PC-3 (cell line): ENCODE measurements at regions of chr12 and their contacts with region 1.

Region 1: DNA sequence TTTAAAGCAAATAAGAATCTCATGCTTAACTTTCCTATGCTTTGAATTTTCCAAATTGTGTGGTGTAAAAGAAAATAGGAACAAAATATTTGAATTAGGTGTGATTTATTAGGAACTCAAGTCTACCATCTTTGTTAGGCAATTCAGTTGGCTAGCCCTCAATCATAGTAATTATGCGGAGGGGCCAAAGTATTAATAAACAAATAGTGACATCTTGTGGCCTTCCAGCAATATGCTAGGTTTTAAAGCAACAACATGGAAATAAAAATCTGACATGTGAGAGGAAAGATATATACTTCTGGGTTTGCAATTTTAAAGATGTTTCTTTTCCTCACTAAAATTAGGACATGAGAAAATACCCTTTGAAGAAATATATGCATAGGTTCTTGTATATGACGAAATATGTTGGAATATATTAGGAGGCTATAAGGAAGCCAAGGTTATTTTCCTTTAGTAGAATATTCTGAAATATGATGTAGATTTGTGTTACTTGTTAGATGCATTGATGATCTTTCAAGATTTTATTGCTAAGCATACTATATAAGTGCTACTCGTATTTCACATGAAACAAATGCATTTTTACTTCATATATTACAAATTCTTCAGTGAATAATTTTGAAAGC is 200.4 kb downstream of the PTPRO start:
- DNase-seq: peak; percentile 67
- ATAC-seq: peak; percentile 29; the same call in 1 of the 2 replicates
- H3K4me3 ChIP-seq: no peak overlapping the region
- H3K27ac ChIP-seq: no peak overlapping the region
- H3K4me1 ChIP-seq: no peaks in the 10 kb centered on the region
- H3K27me3 ChIP-seq: peaks cover 8% of the 10 kb centered on the region; the same call in 1 of the 2 replicates
- CTCF ChIP-seq: peak; percentile 74

Region 2: GRCh38 chr12:15116086-15116485 is 406.6 kb before region 1 on chr12:
- CTCF ChIA-PET with region 1: no interaction called
- POLR2A ChIA-PET with region 1: no interaction called
- intact Hi-C with region 1: no loop called
- DNase-seq: no peak
- ATAC-seq: no peak
- H3K4me3 ChIP-seq: no peak overlapping the region
- H3K27ac ChIP-seq: no peak overlapping the region
- H3K4me1 ChIP-seq: no peaks in the 10 kb centered on the region
- H3K27me3 ChIP-seq: peaks cover 70% of the 10 kb centered on the region
- CTCF ChIP-seq: no peak

Region 3: DNA sequence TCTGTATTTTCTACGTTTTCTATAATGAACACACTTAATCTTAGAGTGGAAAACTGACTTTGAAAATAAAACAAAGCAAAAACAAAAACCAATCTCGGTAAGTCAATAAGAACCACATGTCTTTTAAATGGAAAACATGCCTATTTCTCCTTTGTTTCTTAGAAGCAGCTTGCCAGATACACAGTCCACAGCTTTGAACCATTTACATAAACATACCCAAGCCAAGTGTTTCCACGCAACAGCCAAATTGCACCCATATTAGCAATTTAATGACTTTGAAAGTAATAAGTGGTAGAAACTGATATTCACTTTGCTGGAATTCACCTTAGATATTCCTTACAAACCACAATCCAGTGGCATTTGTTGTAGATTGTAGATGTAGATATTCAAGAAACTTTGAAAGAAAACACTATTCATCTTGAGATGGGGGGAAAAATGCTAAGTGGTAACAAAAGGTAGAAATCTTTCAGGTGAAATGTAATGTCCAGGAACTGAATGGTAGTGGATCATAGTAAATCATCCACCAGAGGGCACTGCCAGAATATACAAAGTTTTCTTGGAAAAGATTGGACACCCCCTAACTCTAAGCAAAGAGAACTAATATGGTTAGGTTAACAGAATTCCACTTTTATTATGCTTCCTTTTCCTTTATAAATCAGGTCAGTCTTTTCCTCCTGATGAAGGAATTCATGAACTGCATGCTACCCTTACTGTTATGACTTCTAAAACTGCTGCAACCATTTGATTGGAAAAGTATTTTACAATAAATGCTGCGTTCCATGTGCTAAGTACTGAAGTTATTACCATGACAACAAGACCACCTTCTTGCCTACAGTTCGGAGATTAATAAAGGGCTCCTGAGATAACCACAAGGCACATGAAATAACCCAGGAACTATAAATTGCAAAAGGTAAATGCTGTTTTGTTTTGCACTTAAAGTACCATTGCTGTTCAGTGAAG is 371.2 kb before region 1 on chr12:
- CTCF ChIA-PET with region 1: no interaction called
- POLR2A ChIA-PET with region 1: no interaction called
- intact Hi-C with region 1: loop called (anchors 5 kb)
- DNase-seq: peak; percentile 42
- ATAC-seq: no peak
- H3K4me3 ChIP-seq: no peak overlapping the region
- H3K27ac ChIP-seq: no peak overlapping the region
- H3K4me1 ChIP-seq: no peaks in the 10 kb centered on the region
- H3K27me3 ChIP-seq: peaks cover 43% of the 10 kb centered on the region; the same call in 1 of the 2 replicates
- CTCF ChIP-seq: peak; percentile 61

Region 4: GRCh38 chr12:15227004-15227679 is 295.5 kb before region 1 on chr12:
- CTCF ChIA-PET with region 1: interaction called, 12 read pairs
- POLR2A ChIA-PET with region 1: no interaction called
- intact Hi-C with region 1: loop called (anchors 1 kb)
- DNase-seq: peak; percentile 67
- ATAC-seq: peak; percentile 71
- H3K4me3 ChIP-seq: no peak overlapping the region
- H3K27ac ChIP-seq: no peak overlapping the region
- H3K4me1 ChIP-seq: no peaks in the 10 kb centered on the region
- H3K27me3 ChIP-seq: no peaks in the 10 kb centered on the region
- CTCF ChIP-seq: peak; percentile 76

Region 5: GRCh38 chr12:15268927-15269552 is 253.6 kb before region 1 on chr12:
- CTCF ChIA-PET with region 1: interaction called, 10 read pairs
- POLR2A ChIA-PET with region 1: no interaction called
- intact Hi-C with region 1: no loop called
- DNase-seq: peak; percentile 56
- ATAC-seq: peak; percentile 46
- H3K4me3 ChIP-seq: no peak overlapping the region
- H3K27ac ChIP-seq: no peak overlapping the region
- H3K4me1 ChIP-seq: peaks cover 6% of the 10 kb centered on the region
- H3K27me3 ChIP-seq: no peaks in the 10 kb centered on the region
- CTCF ChIP-seq: peak; percentile 83

Region 6: DNA sequence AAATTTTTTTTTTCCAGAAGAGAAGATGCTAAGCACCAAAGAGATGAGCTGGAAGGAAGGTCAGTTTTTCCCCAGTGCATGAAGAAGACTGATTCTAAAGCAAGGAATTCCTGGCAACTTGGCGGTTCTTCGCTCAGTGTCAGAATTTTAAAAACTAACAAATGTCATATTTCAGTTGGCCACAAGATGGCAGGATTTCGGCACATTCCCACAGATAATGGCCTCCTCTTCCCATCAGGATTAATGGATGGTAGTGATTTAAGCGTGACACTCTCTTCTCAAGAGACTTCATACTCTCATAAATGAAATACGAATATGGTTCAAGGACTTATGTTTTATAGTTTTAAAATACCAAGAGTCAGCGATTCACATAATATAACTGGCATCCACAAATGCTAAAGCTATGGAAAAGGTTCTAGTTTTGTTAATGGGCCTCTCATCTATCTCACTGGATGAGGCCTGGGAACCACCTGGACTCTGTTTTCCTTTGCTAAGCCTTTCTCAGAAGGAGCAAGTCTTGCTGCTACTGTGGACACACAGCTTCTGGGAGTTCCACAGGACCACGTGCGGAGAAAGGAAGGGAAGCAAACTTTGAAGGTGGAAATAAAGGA is 246.5 kb before region 1 on chr12:
- CTCF ChIA-PET with region 1: interaction called, 10 read pairs
- POLR2A ChIA-PET with region 1: no interaction called
- intact Hi-C with region 1: loop called (anchors 1 kb)
- DNase-seq: peak; percentile 70
- ATAC-seq: no peak
- H3K4me3 ChIP-seq: no peak overlapping the region
- H3K27ac ChIP-seq: 0 out of 2 replicates have a peak overlapping the region, but pooled peaks have one; percentile 85
- H3K4me1 ChIP-seq: peaks cover 49% of the 10 kb centered on the region
- H3K27me3 ChIP-seq: no peaks in the 10 kb centered on the region
- CTCF ChIP-seq: peak; percentile 71

Region 7: DNA sequence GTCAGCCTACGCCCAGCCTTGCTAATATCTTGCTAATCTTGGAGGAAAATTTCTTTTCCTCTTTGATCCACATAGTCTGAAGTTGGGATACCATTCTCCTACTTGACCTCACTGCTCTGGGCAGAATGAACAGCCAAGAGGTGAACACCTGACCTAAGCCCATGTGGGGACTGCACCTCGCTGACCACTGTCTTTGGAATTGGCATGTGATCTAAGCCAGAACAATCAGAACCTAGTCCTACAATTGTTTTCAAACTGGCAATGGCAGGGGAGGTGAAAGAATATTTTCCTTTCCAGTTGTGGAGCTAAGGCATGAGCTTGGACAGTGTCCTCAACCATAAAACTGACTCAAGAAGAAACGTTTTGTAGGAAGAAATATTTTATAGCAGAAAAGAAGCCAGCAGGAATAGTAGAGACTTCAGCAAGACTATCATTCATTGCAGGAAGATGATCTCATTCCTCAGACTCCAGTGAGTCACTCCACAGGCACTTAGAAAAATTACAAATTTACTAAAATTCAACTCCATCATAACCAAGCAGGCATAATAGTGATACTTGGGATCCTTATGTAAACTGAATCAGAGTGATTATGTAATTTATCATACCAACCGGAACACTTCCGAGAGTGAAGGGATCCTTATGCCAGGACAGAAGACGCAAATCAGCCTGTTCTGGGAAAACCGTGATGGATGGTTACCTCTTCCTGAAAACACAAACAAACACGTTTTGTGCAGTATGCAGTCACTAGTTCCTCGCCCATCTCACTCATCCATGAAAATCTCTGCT is 185.7 kb before region 1 on chr12:
- CTCF ChIA-PET with region 1: interaction called, 10 read pairs
- POLR2A ChIA-PET with region 1: no interaction called
- intact Hi-C with region 1: no loop called
- DNase-seq: peak; percentile 52
- ATAC-seq: peak; percentile 67; the same call in 1 of the 2 replicates
- H3K4me3 ChIP-seq: no peak overlapping the region
- H3K27ac ChIP-seq: no peak overlapping the region
- H3K4me1 ChIP-seq: peaks cover 15% of the 10 kb centered on the region
- H3K27me3 ChIP-seq: 0 out of 2 replicates have a peak, but pooled peaks cover 5% of the 10 kb centered on the region
- CTCF ChIP-seq: no peak

Region 8: GRCh38 chr12:15488481-15488880 is 34.2 kb before region 1 on chr12:
- CTCF ChIA-PET with region 1: no interaction called
- POLR2A ChIA-PET with region 1: no interaction called
- intact Hi-C with region 1: no loop called
- DNase-seq: no peak
- ATAC-seq: no peak
- H3K4me3 ChIP-seq: no peak overlapping the region
- H3K27ac ChIP-seq: no peak overlapping the region
- H3K4me1 ChIP-seq: no peaks in the 10 kb centered on the region
- H3K27me3 ChIP-seq: no peaks in the 10 kb centered on the region; the same call in none of the 2 replicates
- CTCF ChIP-seq: no peak

Region 9: GRCh38 chr12:15534322-15534721 is 11.6 kb after region 1 on chr12:
- CTCF ChIA-PET with region 1: no interaction called
- POLR2A ChIA-PET with region 1: no interaction called
- intact Hi-C with region 1: no loop called
- DNase-seq: no peak
- ATAC-seq: no peak
- H3K4me3 ChIP-seq: no peak overlapping the region
- H3K27ac ChIP-seq: no peak overlapping the region
- H3K4me1 ChIP-seq: no peaks in the 10 kb centered on the region
- H3K27me3 ChIP-seq: no peaks in the 10 kb centered on the region
- CTCF ChIP-seq: no peak

Region 10: GRCh38 chr12:15546102-15546701 is 23.5 kb after region 1 on chr12:
- CTCF ChIA-PET with region 1: no interaction called
- POLR2A ChIA-PET with region 1: no interaction called
- intact Hi-C with region 1: no loop called
- DNase-seq: no peak
- ATAC-seq: no peak
- H3K4me3 ChIP-seq: no peak overlapping the region
- H3K27ac ChIP-seq: no peak overlapping the region
- H3K4me1 ChIP-seq: no peaks in the 10 kb centered on the region
- H3K27me3 ChIP-seq: no peaks in the 10 kb centered on the region
- CTCF ChIP-seq: no peak